Calu3 (cell line): ENCODE measurements at regions of chr16 and their contacts with region 1.

Region 1: GRCh38 chr16:52581530-52581929 is 34.6 kb upstream of the TOX3 start:
- DNase-seq: peak; percentile 36
- H3K4me3 Mint-ChIP-seq: no peak overlapping the region
- H3K27ac Mint-ChIP-seq: no peak overlapping the region
- H3K4me1 Mint-ChIP-seq: peaks cover 42% of the 10 kb centered on the region
- H3K27me3 Mint-ChIP-seq: no peaks in the 10 kb centered on the region
- CTCF ChIP-seq: peak; percentile 49

Region 2: DNA sequence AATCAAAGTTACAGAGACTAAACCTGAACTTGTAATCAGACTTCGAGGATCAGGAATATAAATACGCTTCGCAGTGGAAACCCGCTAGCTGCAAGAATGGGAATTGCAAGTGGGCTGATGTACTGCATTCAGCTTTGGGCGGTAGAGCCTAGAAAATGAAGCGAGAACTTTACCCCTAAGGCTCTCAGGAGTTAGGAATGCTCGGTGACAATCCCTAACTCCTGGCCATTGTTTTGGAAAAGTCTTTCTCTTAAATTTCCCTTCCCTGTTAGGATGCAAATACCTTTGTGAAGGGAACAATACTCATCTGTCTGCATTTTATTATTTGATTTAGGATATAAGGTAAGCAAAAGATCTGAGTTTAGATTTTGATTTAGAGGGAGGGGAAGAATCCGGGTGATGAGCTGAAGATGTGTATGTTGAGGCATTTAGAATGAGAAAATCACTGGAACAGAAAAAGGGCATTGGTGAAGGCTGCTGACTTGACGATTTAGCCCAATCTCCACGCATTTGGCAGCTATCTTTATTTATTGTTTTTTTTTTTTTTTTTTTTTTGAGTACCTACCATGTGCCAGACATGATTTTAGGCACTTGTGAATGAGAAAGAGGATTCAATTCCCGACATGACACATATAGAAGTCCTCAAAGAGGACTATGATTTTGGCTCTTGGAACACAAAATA is 32.4 kb before region 1 on chr16:
- CTCF ChIA-PET with region 1: no interaction called
- intact Hi-C with region 1: no loop called
- DNase-seq: no peak
- H3K4me3 Mint-ChIP-seq: no peak overlapping the region
- H3K27ac Mint-ChIP-seq: no peak overlapping the region
- H3K4me1 Mint-ChIP-seq: peaks cover 42% of the 10 kb centered on the region
- H3K27me3 Mint-ChIP-seq: no peaks in the 10 kb centered on the region
- CTCF ChIP-seq: no peak

Region 3: DNA sequence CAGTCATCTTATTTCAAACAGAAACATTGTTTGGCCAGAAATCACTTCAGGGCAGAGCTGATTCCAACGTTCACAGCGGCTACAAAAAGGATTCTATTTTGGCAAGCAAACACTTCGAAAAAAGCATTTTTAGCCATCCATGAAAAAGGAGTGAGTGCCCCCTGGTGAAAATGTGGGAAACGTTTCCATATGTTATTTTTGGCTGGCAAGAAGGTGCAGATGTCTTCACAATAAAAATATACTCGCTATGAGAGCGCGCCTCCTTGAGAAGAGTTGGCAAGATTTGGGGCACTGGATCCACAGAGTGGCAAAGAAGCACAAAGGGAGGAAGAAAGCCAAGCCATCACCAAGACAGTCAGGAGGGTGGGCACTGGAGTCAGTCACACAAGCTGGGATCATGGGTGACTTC is 280.1 kb after region 1 on chr16:
- CTCF ChIA-PET with region 1: interaction called, 3 read pairs
- intact Hi-C with region 1: loop called (anchors 1 kb)
- DNase-seq: peak; percentile 61
- H3K4me3 Mint-ChIP-seq: no peak overlapping the region
- H3K27ac Mint-ChIP-seq: no peak overlapping the region
- H3K4me1 Mint-ChIP-seq: peaks cover 36% of the 10 kb centered on the region
- H3K27me3 Mint-ChIP-seq: no peaks in the 10 kb centered on the region
- CTCF ChIP-seq: peak; percentile 48

Region 4: DNA sequence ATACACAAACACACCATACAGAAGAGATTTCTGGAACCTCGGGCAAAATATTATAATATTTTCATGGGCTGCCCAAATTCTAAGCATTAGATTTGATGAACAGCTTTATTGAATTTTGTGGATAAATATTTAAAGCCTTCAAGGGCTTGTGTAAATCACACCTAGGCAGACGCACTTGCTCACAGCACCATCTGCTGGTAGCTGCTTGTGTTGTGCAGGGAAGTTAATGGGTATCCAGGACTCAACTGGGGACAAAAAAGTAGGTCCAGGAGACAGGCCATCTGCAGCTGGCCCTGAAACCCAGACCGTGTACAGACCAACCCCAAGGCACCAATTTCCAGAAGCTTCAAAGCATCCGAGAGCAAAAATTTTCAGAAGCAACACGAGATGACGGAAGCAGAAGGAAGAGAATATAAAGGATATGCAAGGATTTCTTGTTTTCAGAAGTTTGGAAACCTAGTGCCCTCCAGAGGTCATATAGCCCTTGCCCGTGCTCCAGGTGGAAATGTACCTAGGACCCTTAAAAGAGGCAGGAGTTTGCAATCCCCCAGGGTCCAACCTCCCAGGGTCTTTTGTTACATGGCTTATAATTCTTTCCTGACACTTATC is 331.1 kb after region 1 on chr16:
- CTCF ChIA-PET with region 1: interaction called, 4 read pairs
- intact Hi-C with region 1: loop called (anchors 1 kb)
- DNase-seq: peak; percentile 82
- H3K4me3 Mint-ChIP-seq: no peak overlapping the region
- H3K27ac Mint-ChIP-seq: no peak overlapping the region
- H3K4me1 Mint-ChIP-seq: peaks cover 7% of the 10 kb centered on the region
- H3K27me3 Mint-ChIP-seq: no peaks in the 10 kb centered on the region
- CTCF ChIP-seq: peak; percentile 89

Region 5: DNA sequence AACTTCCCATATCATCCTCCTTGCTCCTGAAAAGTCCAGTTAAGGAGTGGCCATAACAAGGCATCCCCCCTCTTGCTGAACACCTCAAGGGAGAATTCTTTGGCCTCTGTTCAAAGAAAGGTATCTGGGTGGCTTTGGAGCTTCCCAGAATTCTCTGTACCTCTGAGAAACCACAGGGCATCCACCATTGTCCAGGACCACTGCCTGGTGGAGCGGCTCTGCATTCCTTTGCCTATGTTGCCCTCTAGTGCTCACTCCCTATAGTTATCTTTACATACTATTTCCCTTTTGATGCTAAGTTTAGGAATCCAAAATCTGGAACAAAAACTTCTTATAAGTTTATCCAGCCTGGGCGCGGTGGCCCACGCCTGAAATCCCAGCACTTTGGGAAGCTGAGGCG is 440.8 kb after region 1 on chr16:
- CTCF ChIA-PET with region 1: no interaction called
- intact Hi-C with region 1: loop called (anchors 2 kb)
- DNase-seq: peak; percentile 71
- H3K4me3 Mint-ChIP-seq: no peak overlapping the region
- H3K27ac Mint-ChIP-seq: no peak overlapping the region
- H3K4me1 Mint-ChIP-seq: no peaks in the 10 kb centered on the region
- H3K27me3 Mint-ChIP-seq: no peaks in the 10 kb centered on the region
- CTCF ChIP-seq: peak; percentile 78